T-cell (primary cell): ENCODE measurements at regions of chr17 and their contacts with region 1.

Region 1: DNA sequence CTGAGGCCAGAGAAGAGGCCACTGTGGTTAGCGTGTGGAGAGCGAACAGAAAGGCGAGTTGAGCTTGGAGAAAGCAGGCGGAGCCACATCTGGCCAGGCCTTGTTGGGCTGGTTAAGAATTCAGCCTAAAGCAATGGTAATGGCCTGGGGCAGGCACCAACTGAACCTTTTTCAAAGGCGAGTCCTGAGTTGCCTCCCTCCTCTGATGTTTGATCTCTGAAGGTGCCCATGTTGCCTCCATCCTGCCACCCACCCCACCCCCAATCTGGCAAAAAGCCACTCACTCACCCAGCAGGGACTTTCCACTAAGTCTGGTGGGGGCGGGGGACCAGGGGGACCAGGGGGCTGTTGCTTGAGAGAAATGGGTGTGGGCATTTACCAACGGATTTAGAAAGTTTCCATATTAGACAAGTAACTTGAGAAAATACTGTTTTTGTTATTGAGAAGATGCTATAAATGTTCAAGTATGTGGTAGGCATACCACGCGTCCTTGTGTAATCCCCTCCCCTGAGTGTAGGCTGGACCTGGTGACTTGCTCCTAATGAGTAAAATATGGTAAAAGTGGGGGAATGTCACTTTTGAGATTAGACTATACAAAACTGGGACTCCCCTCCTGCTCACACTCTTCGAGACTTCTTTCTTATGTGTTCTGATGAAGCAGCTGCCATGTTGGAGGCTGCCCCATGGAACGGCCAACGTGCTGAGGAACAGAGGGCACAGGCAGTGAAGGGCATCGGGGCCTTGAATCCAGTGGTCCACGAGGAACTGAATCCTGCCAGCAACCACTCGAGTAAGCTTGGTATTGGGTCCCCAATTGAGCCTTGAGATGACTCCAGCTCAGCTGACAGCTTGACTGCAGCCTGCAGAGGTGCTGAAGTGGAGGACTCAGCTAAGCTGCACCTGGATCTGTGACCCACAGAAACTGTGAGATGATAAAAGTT is 29.9 kb upstream of the TNS4 start:
- DNase-seq: peak in 33 of 35 experiments; percentile 13 to 86 (median 77)
- ATAC-seq: peak in 1 of 4 experiments; percentile 17
- H3K4me3 ChIP-seq: no peak overlapping the region
- H3K4me3 Mint-ChIP-seq: peak overlapping the region in 2 of 3 donors; percentile 4 to 63
- H3K27ac ChIP-seq: peak overlapping the region; percentile 20
- H3K27ac Mint-ChIP-seq: peak overlapping the region; percentile 71 to 73
- H3K4me1 ChIP-seq: peaks cover 55 to 66% of the 10 kb centered on the region in 2 experiments
- H3K4me1 Mint-ChIP-seq: peaks cover 67 to 83% (median 68%) of the 10 kb centered on the region in 3 donors
- H3K27me3 ChIP-seq: no peaks in the 10 kb centered on the region
- H3K27me3 Mint-ChIP-seq: no peaks in the 10 kb centered on the region

Region 2: GRCh38 chr17:40303009-40303657 is 228.2 kb before region 1 on chr17:
- CTCF ChIA-PET with region 1: interaction called in 1 of 2 experiments, 13 read pairs
- POLR2A ChIA-PET with region 1: no interaction called
- DNase-seq: peak in 19 of 35 experiments; percentile 33 to 83 (median 53)
- ATAC-seq: peak in 3 of 4 experiments; percentile 58 to 62 (median 60)
- H3K4me3 ChIP-seq: no peak overlapping the region
- H3K4me3 Mint-ChIP-seq: no peak overlapping the region
- H3K27ac ChIP-seq: no peak overlapping the region
- H3K27ac Mint-ChIP-seq: no peak overlapping the region
- H3K4me1 ChIP-seq: peaks cover 28 to 31% of the 10 kb centered on the region in 2 experiments
- H3K4me1 Mint-ChIP-seq: peaks cover 14 to 16% (median 15%) of the 10 kb centered on the region in 3 donors
- H3K27me3 ChIP-seq: no peaks in the 10 kb centered on the region
- H3K27me3 Mint-ChIP-seq: no peaks in the 10 kb centered on the region

Region 3: DNA sequence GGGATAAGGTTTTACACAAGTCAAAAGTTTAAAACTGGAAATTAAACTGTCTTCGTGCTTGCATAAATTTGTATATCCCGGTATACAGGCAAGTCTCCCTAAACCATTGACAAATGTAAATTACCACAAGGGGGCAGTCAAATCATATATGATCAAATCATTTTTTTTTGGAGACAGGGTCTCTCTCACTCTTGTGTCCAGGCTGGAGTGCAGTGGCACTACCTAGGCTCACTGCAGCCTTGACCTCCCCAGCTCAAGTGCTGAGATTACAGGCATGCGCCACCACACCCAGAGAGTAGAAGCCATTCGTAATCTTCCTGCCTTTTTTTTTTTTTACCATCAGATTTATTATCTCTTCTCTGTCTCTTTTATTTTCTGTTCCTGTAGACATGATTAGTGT is 132.1 kb before region 1 on chr17:
- CTCF ChIA-PET with region 1: interaction called, 8 to 32 read pairs
- POLR2A ChIA-PET with region 1: interaction called in 1 of 2 experiments, 3 read pairs
- DNase-seq: peak in 4 of 35 experiments; percentile 11 to 77 (median 13)
- ATAC-seq: peak in 3 of 4 experiments; percentile 29 to 74 (median 54)
- H3K4me3 ChIP-seq: no peak overlapping the region
- H3K4me3 Mint-ChIP-seq: no peak overlapping the region
- H3K27ac ChIP-seq: no peak overlapping the region
- H3K27ac Mint-ChIP-seq: peak overlapping the region in 1 of 2 donors; percentile 70
- H3K4me1 ChIP-seq: peaks cover 0 to 2% of the 10 kb centered on the region in 2 experiments
- H3K4me1 Mint-ChIP-seq: peaks cover 14 to 28% (median 22%) of the 10 kb centered on the region in 3 donors
- H3K27me3 ChIP-seq: no peaks in the 10 kb centered on the region
- H3K27me3 Mint-ChIP-seq: no peaks in the 10 kb centered on the region

Region 4: GRCh38 chr17:40433551-40434415 is 97.5 kb before region 1 on chr17:
- CTCF ChIA-PET with region 1: no interaction called
- POLR2A ChIA-PET with region 1: no interaction called
- DNase-seq: peak in 3 of 35 experiments; percentile 7 to 36 (median 13)
- ATAC-seq: peak in 3 of 4 experiments; percentile 50 to 59 (median 53)
- H3K4me3 ChIP-seq: no peak overlapping the region
- H3K4me3 Mint-ChIP-seq: no peak overlapping the region
- H3K27ac ChIP-seq: no peak overlapping the region
- H3K27ac Mint-ChIP-seq: peak overlapping the region in 1 of 2 donors; percentile 56
- H3K4me1 ChIP-seq: peaks cover 0 to 3% of the 10 kb centered on the region in 2 experiments
- H3K4me1 Mint-ChIP-seq: peaks cover 0 to 11% (median 3%) of the 10 kb centered on the region in 3 donors
- H3K27me3 ChIP-seq: peaks cover 0 to 3% of the 10 kb centered on the region in 2 experiments
- H3K27me3 Mint-ChIP-seq: no peaks in the 10 kb centered on the region

Region 5: DNA sequence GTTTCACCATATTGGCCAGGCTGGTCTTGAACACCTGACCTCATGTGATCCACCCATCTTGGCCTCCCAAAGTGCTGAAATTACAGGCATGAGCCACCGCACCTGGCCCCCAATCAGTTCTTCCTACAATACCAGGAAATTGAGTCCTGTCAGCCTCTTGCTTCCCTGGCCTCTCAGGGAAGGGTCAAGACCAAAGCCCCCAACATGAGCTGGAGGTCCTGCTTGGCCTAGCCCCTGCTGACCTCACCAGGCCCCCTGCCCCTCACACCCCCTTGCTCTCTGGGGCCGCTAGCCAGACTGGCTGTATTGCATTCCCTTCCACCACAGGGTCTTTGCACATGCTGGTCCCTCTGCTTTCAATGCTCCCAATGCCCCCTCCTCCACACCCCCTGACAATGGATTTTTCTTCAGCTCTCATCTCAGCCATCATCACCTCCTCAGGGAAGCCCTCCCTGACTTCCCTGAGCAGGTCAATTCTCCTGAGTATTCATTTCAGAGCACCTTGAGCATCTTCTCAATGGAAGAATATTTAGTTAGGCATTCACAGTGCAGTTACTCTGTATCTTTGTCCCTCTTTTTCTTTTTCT is 63.9 kb before region 1 on chr17:
- CTCF ChIA-PET with region 1: interaction called in 1 of 2 experiments, 12 read pairs
- POLR2A ChIA-PET with region 1: no interaction called
- DNase-seq: no peak
- ATAC-seq: no peak
- H3K4me3 ChIP-seq: no peak overlapping the region
- H3K4me3 Mint-ChIP-seq: no peak overlapping the region
- H3K27ac ChIP-seq: no peak overlapping the region
- H3K27ac Mint-ChIP-seq: no peak overlapping the region
- H3K4me1 ChIP-seq: no peaks in the 10 kb centered on the region
- H3K4me1 Mint-ChIP-seq: no peaks in the 10 kb centered on the region
- H3K27me3 ChIP-seq: peaks cover 0 to 5% of the 10 kb centered on the region in 2 experiments
- H3K27me3 Mint-ChIP-seq: no peaks in the 10 kb centered on the region

Region 6: GRCh38 chr17:40480501-40481003 is 50.8 kb before region 1 on chr17:
- CTCF ChIA-PET with region 1: interaction called, 10 to 22 read pairs
- POLR2A ChIA-PET with region 1: interaction called in 1 of 2 experiments, 4 read pairs
- DNase-seq: peak; percentile 73 to 95 (median 88)
- ATAC-seq: peak; percentile 88 to 92 (median 91)
- H3K4me3 ChIP-seq: peak overlapping the region in 1 of 2 donors; percentile 9
- H3K4me3 Mint-ChIP-seq: peak overlapping the region; percentile 36 to 68 (median 60)
- H3K27ac ChIP-seq: peak overlapping the region; percentile 99
- H3K27ac Mint-ChIP-seq: peak overlapping the region; percentile 94 to 98
- H3K4me1 ChIP-seq: peaks cover 15 to 86% of the 10 kb centered on the region in 2 experiments
- H3K4me1 Mint-ChIP-seq: peaks cover 59 to 80% (median 59%) of the 10 kb centered on the region in 3 donors
- H3K27me3 ChIP-seq: peaks cover 0 to under 1% of the 10 kb centered on the region in 2 experiments
- H3K27me3 Mint-ChIP-seq: no peaks in the 10 kb centered on the region

Region 7: DNA sequence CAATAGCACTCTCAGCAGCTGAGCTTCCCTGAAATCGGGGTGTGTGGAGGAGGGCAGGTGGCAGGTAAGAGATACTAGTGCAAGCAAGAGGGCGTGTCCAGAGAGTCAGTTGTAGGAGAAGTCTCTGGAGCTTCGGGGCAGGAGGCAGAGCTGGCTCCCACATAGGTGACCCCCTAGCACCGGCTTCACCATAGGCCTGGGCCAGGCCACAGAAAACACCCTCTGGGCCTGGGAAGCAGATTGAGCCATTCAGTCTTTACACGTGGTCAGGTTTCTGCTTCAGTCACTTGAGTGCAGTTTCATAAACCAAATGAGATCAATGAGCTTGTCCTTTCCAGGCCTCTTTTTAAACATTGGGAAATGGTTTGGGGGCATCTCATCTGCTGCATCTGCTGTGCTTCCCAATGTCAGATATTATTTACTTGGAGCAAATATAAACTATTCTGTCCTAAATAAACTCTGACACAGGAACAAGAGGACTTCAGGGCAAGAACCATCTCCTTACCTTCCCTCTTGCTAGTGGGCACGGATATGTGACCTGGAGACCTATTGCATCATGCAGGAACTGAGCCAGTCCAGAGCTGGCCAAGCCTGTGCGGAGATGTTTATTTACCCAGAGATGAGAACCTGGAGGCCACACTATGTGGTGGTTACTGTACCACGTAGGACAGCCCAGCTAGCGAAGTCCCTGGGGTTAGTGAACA is 17.8 kb after region 1 on chr17:
- CTCF ChIA-PET with region 1: interaction called, 3 to 29 read pairs
- POLR2A ChIA-PET with region 1: interaction called, 3 to 5 read pairs
- DNase-seq: peak in 1 of 35 experiments; percentile 6
- ATAC-seq: no peak
- H3K4me3 ChIP-seq: no peak overlapping the region
- H3K4me3 Mint-ChIP-seq: peak overlapping the region in 1 of 3 donors; percentile 49
- H3K27ac ChIP-seq: peak overlapping the region; percentile 24
- H3K27ac Mint-ChIP-seq: peak overlapping the region; percentile 86 to 91
- H3K4me1 ChIP-seq: peaks cover 33 to 86% of the 10 kb centered on the region in 2 experiments
- H3K4me1 Mint-ChIP-seq: peaks cover 90 to 92% (median 90%) of the 10 kb centered on the region in 3 donors
- H3K27me3 ChIP-seq: no peaks in the 10 kb centered on the region
- H3K27me3 Mint-ChIP-seq: no peaks in the 10 kb centered on the region

Region 8: GRCh38 chr17:40663252-40663651 is 131.9 kb after region 1 on chr17:
- CTCF ChIA-PET with region 1: no interaction called
- POLR2A ChIA-PET with region 1: no interaction called
- DNase-seq: no peak
- ATAC-seq: no peak
- H3K4me3 ChIP-seq: no peak overlapping the region
- H3K4me3 Mint-ChIP-seq: no peak overlapping the region
- H3K27ac ChIP-seq: no peak overlapping the region
- H3K27ac Mint-ChIP-seq: peak overlapping the region in 1 of 2 donors; percentile 60
- H3K4me1 ChIP-seq: peaks cover 0 to 4% of the 10 kb centered on the region in 2 experiments
- H3K4me1 Mint-ChIP-seq: peaks cover 8 to 13% (median 10%) of the 10 kb centered on the region in 3 donors
- H3K27me3 ChIP-seq: peaks cover 4 to 15% of the 10 kb centered on the region in 2 experiments
- H3K27me3 Mint-ChIP-seq: peaks cover 32% of the 10 kb centered on the region in 2 donors

Region 9: GRCh38 chr17:40726919-40727318 is 195.6 kb after region 1 on chr17:
- CTCF ChIA-PET with region 1: no interaction called
- POLR2A ChIA-PET with region 1: no interaction called
- DNase-seq: peak in 1 of 35 experiments; percentile 36
- ATAC-seq: peak in 3 of 4 experiments; percentile 41 to 55 (median 50)
- H3K4me3 ChIP-seq: no peak overlapping the region
- H3K4me3 Mint-ChIP-seq: no peak overlapping the region
- H3K27ac ChIP-seq: no peak overlapping the region
- H3K27ac Mint-ChIP-seq: no peak overlapping the region
- H3K4me1 ChIP-seq: no peaks in the 10 kb centered on the region
- H3K4me1 Mint-ChIP-seq: no peaks in the 10 kb centered on the region
- H3K27me3 ChIP-seq: peaks cover 6 to 10% of the 10 kb centered on the region in 2 experiments
- H3K27me3 Mint-ChIP-seq: peaks cover 21 to 25% of the 10 kb centered on the region in 2 donors